ENCODE measurements at regions of chr6 and their contacts with region 1.

Region 1: DNA sequence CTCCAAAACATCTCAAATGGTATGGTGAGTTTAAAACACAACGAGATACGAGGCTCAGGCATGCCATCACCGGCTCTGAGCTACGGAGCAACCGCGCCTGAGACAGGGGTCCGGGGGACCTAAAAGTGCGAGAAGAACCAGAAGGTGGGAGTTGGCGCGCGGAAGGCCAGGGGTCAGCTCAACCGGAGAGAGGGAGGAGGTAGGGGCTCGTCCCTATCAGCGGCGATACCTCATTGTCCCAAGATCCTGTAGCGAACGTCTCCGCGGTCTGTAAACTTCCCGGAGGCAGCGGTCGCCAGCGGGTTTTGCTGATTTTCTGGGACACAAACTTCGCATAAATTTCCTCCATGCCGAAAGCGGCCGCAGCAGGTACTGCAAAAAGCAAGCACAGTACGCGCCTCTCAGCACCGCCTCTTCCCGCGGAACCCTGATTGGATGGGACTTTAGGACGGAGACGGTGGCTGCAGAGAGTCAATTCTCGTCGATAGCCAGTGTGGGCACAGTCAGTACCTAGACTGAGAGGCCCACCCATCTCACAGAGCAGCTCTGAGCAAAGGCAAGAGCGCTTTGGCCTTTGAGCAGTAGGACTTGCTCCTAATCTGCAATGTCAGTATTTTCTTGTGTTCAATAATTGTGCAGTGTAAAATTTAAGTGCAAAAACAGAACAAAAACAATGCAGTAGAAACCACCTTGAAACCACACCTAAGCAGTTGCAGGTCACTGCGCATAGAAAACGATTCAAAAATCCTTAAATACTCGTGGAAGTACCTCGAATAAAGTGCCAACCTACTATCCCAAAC is at the start of gene NUP43:
- DNase-seq: peak; percentile 93
- ATAC-seq: peak; percentile 67
- H3K4me3 ChIP-seq: peak within 1 kb of the TSS; percentile 74 to 97 (median 80)
- H3K4me3 Mint-ChIP-seq: peak within 1 kb of the TSS; percentile 96
- H3K27ac ChIP-seq: peak within 1 kb of the TSS; percentile 63 to 65
- H3K27ac Mint-ChIP-seq: peak within 1 kb of the TSS; percentile 90
- H3K4me1 ChIP-seq: peaks cover 23 to 29% of the 10 kb centered on the region in 2 donors
- H3K4me1 Mint-ChIP-seq: peaks cover 28% of the 10 kb centered on the region
- H3K27me3 ChIP-seq: no peaks in the 10 kb centered on the region
- H3K27me3 Mint-ChIP-seq: no peaks in the 10 kb centered on the region
- CTCF ChIP-seq: peak; percentile 71
- total RNA-seq, gene NUP43: 75.7 and 77.7 TPM in 2 replicates

Region 2: GRCh38 chr6:149545754-149546528 is 200.4 kb before region 1 on chr6 and contains the start of gene PPIL4:
- CTCF ChIA-PET with region 1: no interaction called
- POLR2A ChIA-PET with region 1: no interaction called
- intact Hi-C with region 1: loop called (anchors 1 kb)
- DNase-seq: peak; percentile 98
- ATAC-seq: peak; percentile 90
- H3K4me3 ChIP-seq: peak within 1 kb of the TSS; percentile 96 to 100 (median 98)
- H3K4me3 Mint-ChIP-seq: peak within 1 kb of the TSS; percentile 98
- H3K27ac ChIP-seq: peak within 1 kb of the TSS; percentile 99
- H3K27ac Mint-ChIP-seq: peak within 1 kb of the TSS; percentile 98
- H3K4me1 ChIP-seq: peaks cover 17 to 22% of the 10 kb centered on the region in 2 donors
- H3K4me1 Mint-ChIP-seq: peaks cover 39% of the 10 kb centered on the region
- H3K27me3 ChIP-seq: no peaks in the 10 kb centered on the region
- H3K27me3 Mint-ChIP-seq: peaks cover 6% of the 10 kb centered on the region
- CTCF ChIP-seq: peak; percentile 83
- total RNA-seq, gene PPIL4: 34.3 and 36.1 TPM in 2 replicates

Region 3: DNA sequence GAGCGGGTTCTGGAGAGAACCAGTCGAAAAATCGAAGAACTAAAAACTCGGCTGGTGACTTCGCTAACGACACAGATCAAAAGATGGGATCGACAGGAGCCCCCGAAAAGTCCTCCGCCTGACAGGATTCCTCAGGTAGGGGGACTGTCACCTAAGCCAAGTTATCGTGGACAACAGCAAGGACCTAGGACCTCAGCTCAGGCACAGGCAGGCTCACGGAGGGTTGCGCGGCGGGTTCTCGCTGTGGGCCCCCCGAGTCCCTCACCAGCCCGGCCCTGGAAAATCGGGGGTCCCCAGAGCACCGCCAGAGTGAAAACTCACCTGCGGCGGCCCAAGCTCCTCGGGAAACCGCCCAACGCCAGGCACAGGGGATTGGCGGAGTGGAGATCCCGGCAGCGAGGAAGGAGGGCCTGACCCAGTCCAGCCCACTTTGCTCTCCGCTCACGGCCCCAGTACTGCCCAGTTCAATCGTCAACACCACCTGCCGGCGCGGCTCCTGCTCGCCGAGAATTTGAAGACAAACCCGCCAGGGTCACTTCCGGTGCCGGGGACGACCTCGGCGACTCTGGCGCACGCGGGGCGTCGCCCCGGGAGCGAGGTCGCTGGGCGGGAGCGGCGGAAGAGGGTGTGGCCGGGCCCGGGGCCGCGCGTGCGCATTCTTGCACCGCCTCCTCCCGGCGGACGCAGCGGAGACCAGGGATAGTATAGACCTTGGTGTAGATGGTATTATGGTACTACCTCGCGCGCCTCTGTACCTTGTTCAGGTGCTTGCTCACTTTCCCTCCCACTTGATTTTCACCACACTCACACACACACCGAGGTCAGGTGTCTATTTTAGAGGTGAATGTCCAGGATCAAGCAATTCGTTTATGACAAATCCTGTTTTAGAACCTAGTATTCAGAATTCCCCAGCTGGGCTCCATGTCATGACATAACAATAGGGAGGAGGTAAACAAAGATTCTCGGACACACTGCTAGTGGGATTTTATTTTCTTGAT is 97.9 kb before region 1 on chr6 and contains the start of gene KATNA1:
- CTCF ChIA-PET with region 1: no interaction called
- POLR2A ChIA-PET with region 1: no interaction called
- intact Hi-C with region 1: loop called (anchors 1 kb)
- DNase-seq: peak; percentile 89
- ATAC-seq: peak; percentile 94
- H3K4me3 ChIP-seq: peak within 1 kb of the TSS; percentile 70 to 93 (median 85)
- H3K4me3 Mint-ChIP-seq: peak within 1 kb of the TSS; percentile 96
- H3K27ac ChIP-seq: peak within 1 kb of the TSS; percentile 47 to 83
- H3K27ac Mint-ChIP-seq: peak within 1 kb of the TSS; percentile 91
- H3K4me1 ChIP-seq: peaks cover 17 to 18% of the 10 kb centered on the region in 2 donors
- H3K4me1 Mint-ChIP-seq: peaks cover 37% of the 10 kb centered on the region
- H3K27me3 ChIP-seq: no peaks in the 10 kb centered on the region
- H3K27me3 Mint-ChIP-seq: no peaks in the 10 kb centered on the region
- CTCF ChIP-seq: no peak
- total RNA-seq, gene KATNA1: 18.5 and 19.8 TPM in 2 replicates

Region 4: GRCh38 chr6:149717588-149718458 is 28.5 kb before region 1 on chr6 and contains the start of gene LATS1:
- CTCF ChIA-PET with region 1: interaction called, 5 read pairs
- POLR2A ChIA-PET with region 1: interaction called, 3 read pairs
- intact Hi-C with region 1: loop called (anchors 1 kb)
- DNase-seq: peak; percentile 91
- ATAC-seq: peak; percentile 92
- H3K4me3 ChIP-seq: peak within 1 kb of the TSS; percentile 80 to 92 (median 86)
- H3K4me3 Mint-ChIP-seq: peak within 1 kb of the TSS; percentile 91
- H3K27ac ChIP-seq: peak within 1 kb of the TSS; percentile 79 to 92
- H3K27ac Mint-ChIP-seq: peak within 1 kb of the TSS; percentile 95
- H3K4me1 ChIP-seq: peaks cover 23% of the 10 kb centered on the region in 2 donors
- H3K4me1 Mint-ChIP-seq: peaks cover 33% of the 10 kb centered on the region
- H3K27me3 ChIP-seq: no peaks in the 10 kb centered on the region
- H3K27me3 Mint-ChIP-seq: no peaks in the 10 kb centered on the region
- CTCF ChIP-seq: no peak
- total RNA-seq, gene LATS1: 48.0 and 54.0 TPM in 2 replicates

Region 5: DNA sequence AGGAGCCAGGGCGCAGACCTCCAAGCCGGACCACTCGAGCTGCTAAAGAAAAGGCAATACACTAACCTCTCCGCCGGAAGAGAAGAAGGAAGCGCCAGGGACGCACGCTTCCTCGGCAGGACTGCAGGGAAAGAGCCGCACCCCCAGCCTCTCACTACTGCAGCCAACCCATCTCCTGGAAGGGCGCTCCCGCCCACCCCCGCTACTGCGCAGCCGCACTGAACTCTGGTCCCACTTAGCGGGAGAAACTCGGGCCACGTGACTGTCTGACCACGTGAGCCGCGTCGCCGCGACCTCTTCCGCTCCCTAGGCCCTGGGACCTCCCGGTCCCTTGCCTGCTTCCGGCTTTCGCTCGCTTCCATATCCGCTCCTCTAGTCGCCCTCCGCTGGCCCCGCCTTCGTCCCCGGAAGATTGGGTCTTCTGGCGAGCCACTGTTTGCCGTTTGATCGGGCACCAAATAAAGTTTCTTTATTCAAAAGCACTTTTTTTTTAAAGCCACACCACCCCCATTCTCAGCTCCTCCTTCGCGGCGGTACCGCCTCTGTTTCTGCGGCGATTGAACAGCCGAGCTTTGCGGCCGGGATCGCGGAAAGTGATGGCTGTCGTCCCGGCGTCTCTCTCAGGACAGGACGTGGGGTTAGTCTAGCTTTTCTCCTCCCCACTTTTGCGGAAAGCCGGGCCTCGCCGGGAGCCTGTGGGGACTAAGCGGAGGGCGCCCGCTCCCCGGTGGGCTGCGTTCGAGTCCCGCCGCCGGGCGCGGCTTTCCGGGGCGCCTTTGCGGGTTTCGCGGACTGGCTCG is 1705.8 kb after region 1 on chr6 and contains the start of gene RMND1:
- CTCF ChIA-PET with region 1: no interaction called
- POLR2A ChIA-PET with region 1: no interaction called
- intact Hi-C with region 1: loop called (anchors 10 kb)
- DNase-seq: peak; percentile 100
- ATAC-seq: peak; percentile 94
- H3K4me3 ChIP-seq: peak within 1 kb of the TSS; percentile 74 to 94 (median 88)
- H3K4me3 Mint-ChIP-seq: peak within 1 kb of the TSS; percentile 97
- H3K27ac ChIP-seq: peak within 1 kb of the TSS; percentile 64 to 88
- H3K27ac Mint-ChIP-seq: peak within 1 kb of the TSS; percentile 88
- H3K4me1 ChIP-seq: peaks cover 18 to 20% of the 10 kb centered on the region in 2 donors
- H3K4me1 Mint-ChIP-seq: peaks cover 32% of the 10 kb centered on the region
- H3K27me3 ChIP-seq: no peaks in the 10 kb centered on the region
- H3K27me3 Mint-ChIP-seq: no peaks in the 10 kb centered on the region
- CTCF ChIP-seq: no peak
- total RNA-seq, gene RMND1: 15.7 and 19.8 TPM in 2 replicates

Measured in B cell (primary cell).